ENCODE measurements at regions of chr21 and their contacts with region 1.

Region 1: GRCh38 chr21:32994305-32994704 is 31.4 kb upstream of the OLIG2 start:
- DNase-seq: no peak
- H3K4me3 Mint-ChIP-seq: no peak overlapping the region
- H3K27ac Mint-ChIP-seq: no peak overlapping the region
- H3K4me1 Mint-ChIP-seq: no peaks in the 10 kb centered on the region
- H3K27me3 Mint-ChIP-seq: peaks cover 48% of the 10 kb centered on the region

Region 2: GRCh38 chr21:33127154-33127893 is 133.0 kb after region 1 on chr21:
- CTCF ChIA-PET with region 1: interaction called, 11 read pairs
- POLR2A ChIA-PET with region 1: no interaction called
- DNase-seq: peak; percentile 67
- H3K4me3 Mint-ChIP-seq: peak overlapping the region; percentile 31
- H3K27ac Mint-ChIP-seq: no peak overlapping the region
- H3K4me1 Mint-ChIP-seq: peaks cover 3% of the 10 kb centered on the region
- H3K27me3 Mint-ChIP-seq: peaks cover 24% of the 10 kb centered on the region

Measured in activated CD4-positive, alpha-beta memory T cell treated with anti-CD3 and anti-CD28 coated beads, Interleukin-2, amount 10 ng/mL, durations not matched to agents 7 days and 5 days (primary cell).